ENCODE measurements at regions of chr11 and their contacts with region 1.

Region 1: GRCh38 chr11:2400069-2400760 is at the start of gene TSSC4:
- DNase-seq: peak; percentile 100
- ATAC-seq: peak; percentile 86
- H3K4me3 Mint-ChIP-seq: peak within 1 kb of the TSS; percentile 88
- H3K27ac Mint-ChIP-seq: peak within 1 kb of the TSS; percentile 83
- H3K4me1 Mint-ChIP-seq: peaks cover 27% of the 10 kb centered on the region
- H3K27me3 Mint-ChIP-seq: no peaks in the 10 kb centered on the region
- CTCF ChIP-seq: peak; percentile 73
- total RNA-seq, gene TSSC4: 59.4 and 59.7 TPM in 2 replicates

Region 2: GRCh38 chr11:1943977-1944376 is 456.2 kb before region 1 on chr11:
- CTCF ChIA-PET with region 1: no interaction called
- POLR2A ChIA-PET with region 1: interaction called, 10 read pairs
- intact Hi-C with region 1: no loop called
- DNase-seq: peak; percentile 12
- ATAC-seq: no peak
- H3K4me3 Mint-ChIP-seq: peak overlapping the region; percentile 24
- H3K27ac Mint-ChIP-seq: no peak overlapping the region
- H3K4me1 Mint-ChIP-seq: peaks cover 2% of the 10 kb centered on the region
- H3K27me3 Mint-ChIP-seq: peaks cover 2% of the 10 kb centered on the region
- CTCF ChIP-seq: no peak

Region 3: GRCh38 chr11:2305140-2305840 is 94.9 kb before region 1 on chr11:
- CTCF ChIA-PET with region 1: interaction called, 30 read pairs
- POLR2A ChIA-PET with region 1: interaction called, 23 read pairs
- intact Hi-C with region 1: loop called (anchors 1 kb)
- DNase-seq: peak; percentile 82
- ATAC-seq: peak; percentile 59
- H3K4me3 Mint-ChIP-seq: peak overlapping the region; percentile 32
- H3K27ac Mint-ChIP-seq: peak overlapping the region; percentile 18
- H3K4me1 Mint-ChIP-seq: peaks cover 60% of the 10 kb centered on the region
- H3K27me3 Mint-ChIP-seq: no peaks in the 10 kb centered on the region
- CTCF ChIP-seq: no peak

Region 4: GRCh38 chr11:2420502-2421225 is 20.4 kb after region 1 on chr11:
- CTCF ChIA-PET with region 1: interaction called, 15 read pairs
- POLR2A ChIA-PET with region 1: interaction called, 10 read pairs
- intact Hi-C with region 1: loop called (anchors 1 kb)
- DNase-seq: peak; percentile 69
- ATAC-seq: peak; percentile 97
- H3K4me3 Mint-ChIP-seq: no peak overlapping the region
- H3K27ac Mint-ChIP-seq: no peak overlapping the region
- H3K4me1 Mint-ChIP-seq: peaks cover 6% of the 10 kb centered on the region
- H3K27me3 Mint-ChIP-seq: no peaks in the 10 kb centered on the region
- CTCF ChIP-seq: peak; percentile 32

Region 5: DNA sequence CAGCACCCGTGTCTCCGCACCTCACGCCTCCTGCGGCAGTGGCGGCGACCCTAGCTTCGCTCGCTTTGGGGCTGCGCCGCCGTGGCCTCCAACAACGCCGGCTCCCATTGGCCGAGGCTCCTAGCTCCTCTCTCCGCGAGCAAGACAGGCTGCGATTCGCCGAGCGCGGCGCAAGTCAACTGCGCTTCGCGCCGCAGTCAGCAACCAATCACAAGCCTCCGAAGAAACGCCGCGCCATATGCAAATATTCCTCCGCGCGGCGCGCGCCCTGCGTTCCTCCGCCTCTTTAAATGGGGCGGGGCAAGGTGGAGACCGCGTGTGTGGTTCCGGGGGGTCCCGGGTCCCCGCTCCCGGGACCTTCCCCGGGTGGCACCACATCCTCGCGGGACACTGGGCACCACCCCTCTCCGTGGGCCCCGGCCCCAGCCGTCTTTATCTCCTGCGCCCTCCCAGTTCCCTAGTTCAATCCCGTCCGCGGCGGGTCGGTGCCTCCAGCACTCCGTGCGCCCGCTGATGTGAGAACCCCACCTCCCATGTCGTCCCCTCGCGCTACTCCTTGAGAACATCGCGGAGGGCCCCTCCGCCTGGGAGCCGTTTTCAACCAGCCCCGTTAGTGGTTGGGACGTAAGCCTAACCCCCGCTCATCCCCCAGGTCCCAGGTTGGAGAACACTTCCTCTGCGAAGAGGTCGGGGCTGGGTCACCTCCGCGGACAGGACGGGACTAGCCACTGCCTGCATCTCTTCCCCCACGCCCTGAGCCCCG is 592.2 kb after region 1 on chr11 and contains the start of gene NAP1L4:
- CTCF ChIA-PET with region 1: no interaction called
- POLR2A ChIA-PET with region 1: no interaction called
- intact Hi-C with region 1: loop called (anchors 1 kb)
- DNase-seq: peak; percentile 89
- ATAC-seq: peak; percentile 87
- H3K4me3 Mint-ChIP-seq: peak within 1 kb of the TSS; percentile 96
- H3K27ac Mint-ChIP-seq: peak within 1 kb of the TSS; percentile 95
- H3K4me1 Mint-ChIP-seq: peaks cover 42% of the 10 kb centered on the region
- H3K27me3 Mint-ChIP-seq: no peaks in the 10 kb centered on the region
- CTCF ChIP-seq: no peak
- total RNA-seq, gene NAP1L4: 112 and 115 TPM in 2 replicates

Measured in activated B cell treated with CpG ODN at 0.5 μM for 24 hours (primary cell).